Left colon (tissue), 2 donors: ENCODE measurements at regions of chr9 and their contacts with region 1.

Region 1: DNA sequence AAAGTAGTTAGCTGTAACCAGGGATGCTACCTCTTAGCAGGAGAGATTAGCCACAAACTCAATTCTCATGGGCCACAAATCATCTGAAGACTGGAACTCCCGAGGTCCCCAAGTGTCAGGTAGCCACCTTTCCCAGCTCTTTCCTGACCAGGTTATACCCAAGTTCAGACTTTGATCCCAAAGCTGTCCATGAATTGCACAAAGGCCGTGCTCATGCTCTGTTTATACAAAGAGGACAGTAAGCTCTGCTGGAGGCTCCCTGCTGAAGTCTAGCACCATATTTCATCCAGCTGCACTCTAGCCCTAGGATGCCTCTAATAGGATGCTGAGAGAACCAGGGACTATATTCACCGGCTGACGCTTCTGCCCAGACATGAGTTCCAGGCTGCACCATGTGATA is 271.0 kb upstream of the ADAMTSL1 start:
- DNase-seq: no peak
- ATAC-seq: peak; percentile 85

Region 2: DNA sequence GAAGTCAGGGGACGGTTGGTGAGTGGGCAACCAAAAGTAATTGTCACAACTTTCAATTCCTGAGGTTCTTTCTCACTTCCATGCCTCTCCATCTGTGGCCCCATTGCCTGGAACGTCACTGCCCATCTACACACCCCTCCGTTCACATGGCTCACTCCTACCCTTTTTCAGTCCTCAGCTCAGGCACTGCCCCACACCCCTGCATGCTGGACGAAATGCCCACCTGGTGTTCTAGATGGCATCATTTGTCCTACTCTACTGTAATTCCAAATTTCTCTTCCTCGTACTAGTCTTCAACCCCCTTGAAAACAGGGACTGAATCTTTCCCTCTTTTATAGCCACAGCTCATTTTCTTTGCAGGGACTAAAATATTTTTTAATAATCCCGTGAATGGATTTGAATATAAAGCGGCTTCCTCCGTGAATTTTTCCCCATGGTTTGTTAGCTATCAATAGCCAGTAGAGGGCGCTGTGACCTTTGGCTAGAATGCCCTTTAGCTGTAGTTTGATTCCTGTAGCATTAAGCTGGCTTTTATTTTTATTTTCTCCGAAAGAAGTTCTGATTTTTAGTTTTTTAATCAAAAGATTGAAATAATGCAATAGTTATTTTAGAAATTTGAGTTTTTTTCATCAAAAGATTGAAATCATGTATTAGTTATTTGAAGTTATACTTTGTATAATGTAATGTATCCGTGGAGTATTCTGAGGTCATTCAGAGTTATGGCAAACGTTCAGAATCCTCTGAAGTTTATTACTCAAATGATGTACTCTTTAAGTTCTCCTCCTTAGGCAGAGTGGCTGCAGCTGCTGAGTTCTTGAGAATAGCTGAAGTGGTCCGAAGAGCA is 392.0 kb before region 1 on chr9:
- intact Hi-C with region 1: loop called (anchors 2 to 5 kb)
- DNase-seq: peak; percentile 43 to 69
- ATAC-seq: peak; percentile 56